ENCODE measurements at regions of chr5 and their contacts with region 1.

Region 1: GRCh38 chr5:139633295-139634027 is 14.7 kb upstream of the CXXC5 start:
- DNase-seq: peak; percentile 76 to 84 (median 80)
- ATAC-seq: peak; percentile 54
- H3K4me3 ChIP-seq: no peak overlapping the region
- H3K27ac ChIP-seq: no peak overlapping the region; the same call in 2 of the 3 replicates
- H3K4me1 ChIP-seq: peaks cover 24 to 27% of the 10 kb centered on the region in 2 experiments
- H3K27me3 ChIP-seq: no peaks in the 10 kb centered on the region
- CTCF ChIP-seq: peak; percentile 96 to 98 (median 97)
- EP300 ChIP-seq: no peak
- POLR2A ChIP-seq: no peak
- RAD21 ChIP-seq: peak; percentile 92 to 95

Region 2: DNA sequence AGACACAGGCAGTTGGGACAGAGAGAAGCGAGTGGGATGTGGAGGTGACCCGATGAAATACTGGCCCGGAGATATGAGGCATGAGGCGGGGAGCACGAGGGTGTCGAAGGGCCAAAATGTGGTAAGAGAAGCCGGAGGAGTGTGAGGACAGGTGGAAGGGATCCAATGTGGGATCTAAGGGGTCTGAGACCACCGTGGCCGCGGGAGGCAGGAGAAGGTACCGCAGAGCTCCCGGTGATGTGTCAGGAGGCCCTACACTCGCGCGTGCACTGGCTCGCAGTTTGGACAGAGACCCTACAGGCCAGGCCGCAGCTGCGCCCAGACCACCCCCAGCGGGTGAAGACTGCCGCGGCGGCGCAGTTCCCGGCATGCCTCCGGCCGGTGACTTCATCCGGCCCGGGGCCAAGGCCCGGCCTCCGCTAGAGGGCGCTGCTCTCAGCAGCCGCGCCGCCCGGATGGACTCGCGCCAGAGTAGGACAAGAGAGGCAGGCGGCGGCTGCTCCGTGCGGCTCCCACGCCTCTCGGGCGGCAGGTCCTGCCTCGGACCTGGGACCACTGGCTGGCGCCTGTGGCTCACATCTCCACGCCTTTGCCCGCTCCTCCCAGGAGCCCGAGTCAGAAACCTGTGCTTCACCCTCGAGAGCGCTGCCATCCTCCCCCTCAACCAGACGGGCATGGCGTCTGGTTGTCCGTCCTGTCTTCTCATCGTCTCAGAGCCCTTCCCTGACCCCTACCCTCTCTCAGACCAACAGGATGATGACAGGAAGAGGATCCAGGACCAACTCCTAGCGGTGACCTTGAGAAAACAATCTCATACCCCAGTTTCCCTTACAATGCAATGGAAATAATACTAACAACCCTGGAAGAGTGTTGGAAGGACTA is 115.5 kb before region 1 on chr5:
- CTCF ChIA-PET with region 1: interaction called, 3 read pairs
- POLR2A ChIA-PET with region 1: no interaction called
- in situ Hi-C with region 1: no loop called
- intact Hi-C with region 1: loop called (anchors 5 kb)
- DNase-seq: peak; percentile 95 to 96 (median 96)
- ATAC-seq: peak; percentile 95
- H3K4me3 ChIP-seq: peak overlapping the region; percentile 44
- H3K27ac ChIP-seq: peak overlapping the region; percentile 90
- H3K4me1 ChIP-seq: peaks cover 14 to 17% of the 10 kb centered on the region in 2 experiments
- H3K27me3 ChIP-seq: no peaks in the 10 kb centered on the region
- CTCF ChIP-seq: peak; percentile 94 to 96 (median 95)
- EP300 ChIP-seq: peak; percentile 60; the same call in 1 of the 2 replicates
- POLR2A ChIP-seq: peak; percentile 89
- RAD21 ChIP-seq: peak; percentile 62 to 67

Region 3: GRCh38 chr5:139670369-139671095 is 37.1 kb after region 1 on chr5:
- CTCF ChIA-PET with region 1: no interaction called
- POLR2A ChIA-PET with region 1: interaction called, 11 read pairs
- in situ Hi-C with region 1: no loop called
- intact Hi-C with region 1: loop called (anchors 1 kb)
- DNase-seq: peak in 2 of 4 experiments; percentile 53 to 67
- ATAC-seq: peak; percentile 42
- H3K4me3 ChIP-seq: no peak overlapping the region; the same call in 1 of the 2 replicates
- H3K27ac ChIP-seq: peak overlapping the region; percentile 95
- H3K4me1 ChIP-seq: peaks cover 78 to 81% of the 10 kb centered on the region in 2 experiments
- H3K27me3 ChIP-seq: no peaks in the 10 kb centered on the region
- CTCF ChIP-seq: peak; percentile 58 to 70 (median 61)
- EP300 ChIP-seq: no peak
- POLR2A ChIP-seq: no peak
- RAD21 ChIP-seq: peak in 1 of 2 experiments; percentile 51; a peak in 2 of 4 replicates

Region 4: GRCh38 chr5:139696894-139697658 is 63.6 kb after region 1 on chr5:
- CTCF ChIA-PET with region 1: interaction called, 3 read pairs
- POLR2A ChIA-PET with region 1: interaction called, 10 read pairs
- in situ Hi-C with region 1: no loop called
- intact Hi-C with region 1: loop called (anchors 1 kb)
- DNase-seq: peak; percentile 92 to 94 (median 92)
- ATAC-seq: peak; percentile 85
- H3K4me3 ChIP-seq: peak overlapping the region; percentile 55
- H3K27ac ChIP-seq: peak overlapping the region; percentile 97
- H3K4me1 ChIP-seq: peaks cover 58 to 66% of the 10 kb centered on the region in 2 experiments
- H3K27me3 ChIP-seq: no peaks in the 10 kb centered on the region
- CTCF ChIP-seq: no peak
- EP300 ChIP-seq: peak; percentile 39
- POLR2A ChIP-seq: peak; percentile 87
- RAD21 ChIP-seq: no peak

Region 5: DNA sequence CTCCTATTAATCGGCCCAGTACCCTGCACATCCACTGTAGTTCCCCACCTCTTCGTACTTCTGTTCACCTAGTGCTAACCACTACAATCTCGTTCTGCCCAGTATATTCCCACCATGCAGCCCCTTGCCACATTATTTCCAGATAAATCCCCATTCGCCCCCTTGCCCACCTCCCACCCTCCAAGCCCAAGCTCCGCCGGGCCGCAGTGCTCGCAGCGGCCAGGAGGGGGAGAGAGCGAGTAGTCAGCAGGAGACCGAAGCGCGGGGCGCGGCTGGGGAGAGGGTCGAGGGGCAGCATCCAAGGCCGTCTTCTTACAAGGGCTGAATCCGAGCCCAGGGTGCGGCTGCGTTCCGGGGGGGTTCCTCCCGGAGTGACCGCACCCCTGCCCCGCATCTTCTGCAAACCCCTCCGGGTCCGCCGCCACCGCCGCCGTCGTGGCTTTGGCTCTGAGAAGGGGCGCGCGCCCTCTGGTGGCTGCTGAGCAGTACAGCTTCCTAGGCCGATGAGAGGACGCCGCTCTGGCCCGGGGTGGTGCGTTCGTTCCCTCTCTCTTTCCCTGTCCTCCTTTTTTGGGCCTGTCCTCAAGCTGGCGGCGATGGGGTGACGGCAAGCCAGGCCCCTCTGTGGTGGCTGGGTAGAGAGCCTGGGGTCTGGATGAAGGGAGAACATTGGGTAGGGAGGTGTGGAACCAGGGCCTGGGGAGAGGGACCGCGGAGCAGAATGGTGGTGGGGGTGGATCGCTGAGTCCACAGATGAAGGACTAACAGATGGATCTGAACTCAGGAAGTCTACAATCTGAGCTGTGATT is 132.2 kb after region 1 on chr5:
- CTCF ChIA-PET with region 1: interaction called, 81 read pairs
- POLR2A ChIA-PET with region 1: interaction called, 7 read pairs
- in situ Hi-C with region 1: loop called (anchors 5 kb)
- intact Hi-C with region 1: loop called (anchors 1 kb)
- DNase-seq: peak; percentile 80 to 87 (median 84)
- ATAC-seq: peak; percentile 95
- H3K4me3 ChIP-seq: peak overlapping the region; percentile 66
- H3K27ac ChIP-seq: no peak overlapping the region; the same call in 2 of the 3 replicates
- H3K4me1 ChIP-seq: peaks cover 2 to 22% of the 10 kb centered on the region in 2 experiments; a peak in 3 of 5 replicates
- H3K27me3 ChIP-seq: no peaks in the 10 kb centered on the region
- CTCF ChIP-seq: peak; percentile 73 to 96 (median 86)
- EP300 ChIP-seq: no peak
- POLR2A ChIP-seq: no peak
- RAD21 ChIP-seq: peak; percentile 98 to 99

Region 6: GRCh38 chr5:139849942-139850341 is 216.5 kb after region 1 on chr5:
- CTCF ChIA-PET with region 1: interaction called, 3 read pairs
- POLR2A ChIA-PET with region 1: no interaction called
- in situ Hi-C with region 1: loop called (anchors 10 kb)
- intact Hi-C with region 1: no loop called
- DNase-seq: no peak
- ATAC-seq: no peak; the same call in 2 of the 3 replicates
- H3K4me3 ChIP-seq: no peak overlapping the region
- H3K27ac ChIP-seq: no peak overlapping the region
- H3K4me1 ChIP-seq: peaks cover 0 to 9% of the 10 kb centered on the region in 2 experiments; a peak in 2 of 5 replicates
- H3K27me3 ChIP-seq: peaks cover 41 to 71% of the 10 kb centered on the region in 2 experiments
- CTCF ChIP-seq: no peak
- EP300 ChIP-seq: no peak
- POLR2A ChIP-seq: no peak
- RAD21 ChIP-seq: no peak

Region 7: GRCh38 chr5:139968547-139969261 is 335.2 kb after region 1 on chr5:
- CTCF ChIA-PET with region 1: interaction called, 7 read pairs
- POLR2A ChIA-PET with region 1: no interaction called
- in situ Hi-C with region 1: no loop called
- intact Hi-C with region 1: loop called (anchors 10 kb)
- DNase-seq: peak; percentile 88 to 91 (median 90)
- ATAC-seq: peak; percentile 100
- H3K4me3 ChIP-seq: no peak overlapping the region
- H3K27ac ChIP-seq: no peak overlapping the region
- H3K4me1 ChIP-seq: peaks cover 0 to 10% of the 10 kb centered on the region in 2 experiments; a peak in 1 of 5 replicates
- H3K27me3 ChIP-seq: peaks cover 0 to 30% of the 10 kb centered on the region in 2 experiments; a peak in 4 of 5 replicates
- CTCF ChIP-seq: peak; percentile 100
- EP300 ChIP-seq: no peak
- POLR2A ChIP-seq: no peak
- RAD21 ChIP-seq: peak; percentile 97 to 99

Measured in K562 (cell line).